ENCODE measurements at regions of chr2 and their contacts with region 1.

Region 1: DNA sequence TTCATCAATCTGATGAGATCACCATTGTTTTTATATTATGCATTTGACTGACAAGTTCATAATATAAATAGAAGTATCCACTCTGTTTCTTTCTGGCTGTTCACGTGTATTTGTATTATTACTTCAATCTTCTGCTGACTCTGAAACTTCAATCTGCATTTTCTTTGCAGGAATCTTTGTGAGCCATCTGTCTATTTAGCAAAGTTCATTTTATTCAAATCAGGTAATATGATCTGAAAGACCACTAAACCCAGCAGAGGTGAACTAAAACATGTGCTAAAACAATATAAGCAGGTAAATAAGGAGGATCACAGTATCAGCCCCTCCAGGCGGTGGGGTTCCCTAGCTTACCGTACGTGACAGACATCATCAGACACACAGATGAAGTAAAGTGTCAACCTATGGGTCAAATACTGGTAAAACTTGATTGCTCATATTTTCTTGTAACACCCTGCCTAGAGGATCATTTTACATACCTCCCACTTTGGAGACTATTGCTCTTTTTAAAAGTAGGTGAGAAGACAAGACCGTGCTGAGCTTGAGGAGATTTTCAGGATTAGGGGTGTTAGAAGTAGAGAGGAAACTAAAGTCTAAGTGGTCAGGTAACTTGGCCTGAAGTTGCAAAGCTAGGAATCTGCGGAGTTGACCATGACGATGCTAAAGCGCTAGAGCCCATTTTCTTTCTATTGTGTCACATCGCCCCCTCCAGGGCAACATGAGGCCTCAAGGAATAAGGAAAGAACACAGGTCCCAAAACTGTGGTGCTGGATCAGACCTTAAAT is 9.0 kb downstream of the DTNB start:
- DNase-seq: peak; percentile 76
- H3K4me3 Mint-ChIP-seq: peak overlapping the region; percentile 34
- H3K27ac Mint-ChIP-seq: peak overlapping the region; percentile 54
- H3K4me1 Mint-ChIP-seq: peaks cover 18% of the 10 kb centered on the region
- H3K27me3 Mint-ChIP-seq: no peaks in the 10 kb centered on the region
- CTCF ChIP-seq: peak; percentile 57

Region 2: GRCh38 chr2:25606892-25607291 is 57.5 kb before region 1 on chr2:
- CTCF ChIA-PET with region 1: interaction called, 84 read pairs
- intact Hi-C with region 1: loop called (anchors 1 kb)
- DNase-seq: no peak
- H3K4me3 Mint-ChIP-seq: no peak overlapping the region
- H3K27ac Mint-ChIP-seq: no peak overlapping the region
- H3K4me1 Mint-ChIP-seq: no peaks in the 10 kb centered on the region
- H3K27me3 Mint-ChIP-seq: no peaks in the 10 kb centered on the region
- CTCF ChIP-seq: peak; percentile 56

Region 3: DNA sequence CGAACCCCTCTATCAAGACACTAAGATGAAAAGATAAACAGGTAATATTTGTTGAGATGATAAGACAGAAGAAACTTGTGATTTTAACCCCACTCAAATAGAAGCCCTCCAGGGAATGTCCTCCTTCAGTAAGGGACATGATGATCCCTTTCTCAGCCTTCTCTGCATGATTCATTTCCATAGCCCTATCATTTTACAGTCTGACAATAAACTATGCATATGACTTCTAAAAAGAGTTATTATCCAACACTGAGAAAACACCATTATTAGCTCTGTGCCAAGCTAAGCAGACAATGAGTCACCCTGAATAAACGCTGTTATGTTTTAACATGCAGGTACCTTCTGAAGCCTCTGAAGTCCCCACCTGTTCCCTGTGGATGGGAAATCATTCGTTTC is 45.7 kb before region 1 on chr2:
- CTCF ChIA-PET with region 1: interaction called, 13 read pairs
- intact Hi-C with region 1: no loop called
- DNase-seq: peak; percentile 17
- H3K4me3 Mint-ChIP-seq: peak overlapping the region; percentile 33
- H3K27ac Mint-ChIP-seq: peak overlapping the region; percentile 57
- H3K4me1 Mint-ChIP-seq: peaks cover 51% of the 10 kb centered on the region
- H3K27me3 Mint-ChIP-seq: no peaks in the 10 kb centered on the region
- CTCF ChIP-seq: no peak

Region 4: GRCh38 chr2:25700221-25700660 is 35.9 kb after region 1 on chr2:
- CTCF ChIA-PET with region 1: interaction called, 15 read pairs
- intact Hi-C with region 1: no loop called
- DNase-seq: peak; percentile 65
- H3K4me3 Mint-ChIP-seq: no peak overlapping the region
- H3K27ac Mint-ChIP-seq: no peak overlapping the region
- H3K4me1 Mint-ChIP-seq: peaks cover 7% of the 10 kb centered on the region
- H3K27me3 Mint-ChIP-seq: peaks cover 7% of the 10 kb centered on the region
- CTCF ChIP-seq: peak; percentile 69